ENCODE measurements at regions of chr15 and their contacts with region 1.

Region 1: DNA sequence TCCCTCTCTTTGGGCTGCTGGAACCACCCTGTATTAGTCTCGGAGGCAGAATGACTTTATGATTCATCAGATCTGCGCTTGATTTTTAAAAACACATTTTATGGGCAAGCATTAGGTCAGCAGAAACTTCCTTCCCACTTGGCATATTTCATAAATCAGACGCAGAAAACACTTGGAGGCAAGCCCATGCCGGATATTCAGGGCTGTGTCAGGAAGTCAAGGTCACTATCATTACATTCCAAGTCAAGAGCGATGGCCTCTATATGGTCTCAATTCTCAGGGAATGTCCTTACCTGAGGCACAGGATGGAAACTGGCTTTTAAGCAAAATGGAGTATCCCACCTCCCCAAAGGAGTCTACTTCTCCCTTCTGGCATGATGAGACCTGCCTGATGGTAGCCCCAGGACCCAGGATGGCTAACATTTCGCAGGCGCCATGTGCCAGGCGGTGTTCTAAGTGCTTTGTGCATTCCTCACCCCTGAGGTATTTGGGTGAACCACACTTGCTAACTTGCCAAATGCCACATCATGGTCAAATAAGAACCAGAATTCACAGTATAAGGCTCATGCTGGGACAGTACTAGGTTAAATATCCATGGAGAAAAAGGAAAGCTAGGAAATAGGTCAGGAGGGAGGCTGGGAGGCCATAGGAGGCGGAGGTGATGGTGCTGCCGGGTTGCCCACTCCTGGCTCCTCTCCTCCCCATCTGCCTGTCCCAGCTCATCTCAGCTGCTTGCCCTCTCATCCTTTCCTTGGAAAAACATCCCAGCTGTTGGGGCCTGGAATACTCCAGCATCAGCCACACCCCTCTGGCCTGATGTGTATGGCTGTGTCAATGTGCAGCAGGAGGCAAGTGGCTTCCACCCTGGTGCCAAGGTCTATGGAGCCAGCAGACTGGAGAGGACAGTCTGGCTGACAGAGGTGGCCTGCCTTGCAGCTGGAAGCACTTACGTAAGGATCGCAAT is 18.8 kb downstream of the BCL2L10 start:
- DNase-seq: peak; percentile 99
- H3K4me3 ChIP-seq: peak overlapping the region in 1 of 3 experiments; percentile 14
- H3K27ac ChIP-seq: peak overlapping the region; percentile 99
- H3K4me1 ChIP-seq: peaks cover 34% of the 10 kb centered on the region
- H3K27me3 ChIP-seq: no peaks in the 10 kb centered on the region
- CTCF ChIP-seq: no peak
- POLR2A ChIP-seq: peak; percentile 69

Region 2: GRCh38 chr15:52112203-52112750 is 18.5 kb after region 1 on chr15:
- CTCF ChIA-PET with region 1: no interaction called
- POLR2A ChIA-PET with region 1: no interaction called
- dilution Hi-C with region 1: no loop called
- intact Hi-C with region 1: loop called (anchors 1 kb)
- DNase-seq: peak; percentile 48
- H3K4me3 ChIP-seq: peak overlapping the region; percentile 3 to 38 (median 35)
- H3K27ac ChIP-seq: no peak overlapping the region
- H3K4me1 ChIP-seq: peaks cover 21% of the 10 kb centered on the region
- H3K27me3 ChIP-seq: no peaks in the 10 kb centered on the region
- CTCF ChIP-seq: peak in 1 of 2 donors; percentile 2
- POLR2A ChIP-seq: no peak

Region 3: DNA sequence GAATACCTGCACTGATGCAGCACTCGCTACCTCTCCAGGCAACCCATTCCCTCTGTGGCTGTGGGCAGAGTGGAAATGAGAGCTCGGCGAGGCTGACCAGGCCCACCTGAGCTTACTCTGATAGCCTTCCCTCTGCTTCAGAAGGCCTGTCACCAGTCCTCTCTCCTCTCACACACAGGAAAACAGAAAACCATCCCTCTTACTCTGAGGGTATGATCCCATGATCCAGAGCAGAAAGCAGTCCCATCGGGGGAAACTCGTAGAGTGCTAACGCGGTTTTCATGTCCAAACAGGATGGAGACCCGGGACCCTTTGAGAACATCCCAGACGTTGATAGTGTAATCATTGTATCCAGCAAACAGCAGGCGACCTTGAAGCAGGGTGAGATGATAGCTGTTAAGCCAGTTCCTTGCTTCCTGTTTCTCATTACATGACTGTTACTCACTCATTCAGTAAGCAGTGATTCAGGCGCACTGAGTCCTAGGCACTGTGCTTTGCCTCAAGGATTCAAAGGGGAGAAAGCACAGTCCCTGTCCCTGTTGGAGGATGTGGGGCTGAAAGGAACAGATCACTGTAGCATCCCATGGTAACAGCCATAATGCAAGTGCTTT is 30.6 kb after region 1 on chr15:
- CTCF ChIA-PET with region 1: interaction called, 3 read pairs
- POLR2A ChIA-PET with region 1: no interaction called
- dilution Hi-C with region 1: no loop called
- intact Hi-C with region 1: loop called (anchors 2 kb)
- DNase-seq: peak; percentile 92
- H3K4me3 ChIP-seq: no peak overlapping the region
- H3K27ac ChIP-seq: peak overlapping the region; percentile 72
- H3K4me1 ChIP-seq: peaks cover 12% of the 10 kb centered on the region
- H3K27me3 ChIP-seq: no peaks in the 10 kb centered on the region
- CTCF ChIP-seq: no peak
- POLR2A ChIP-seq: peak; percentile 23

Measured in endothelial cell of umbilical vein (primary cell).